ENCODE measurements at regions of chr4 and their contacts with region 1.

Region 1: GRCh38 chr4:152535903-152536544 is at the start of gene FBXW7:
- DNase-seq: peak; percentile 99
- H3K4me3 ChIP-seq: peak within 1 kb of the TSS; percentile 78 to 97 (median 85)
- H3K27ac ChIP-seq: peak within 1 kb of the TSS; percentile 88
- H3K4me1 ChIP-seq: peaks cover 16% of the 10 kb centered on the region
- H3K27me3 ChIP-seq: no peaks in the 10 kb centered on the region
- CTCF ChIP-seq: no peak
- total RNA-seq, gene FBXW7: 42.7 to 109 TPM

Region 2: DNA sequence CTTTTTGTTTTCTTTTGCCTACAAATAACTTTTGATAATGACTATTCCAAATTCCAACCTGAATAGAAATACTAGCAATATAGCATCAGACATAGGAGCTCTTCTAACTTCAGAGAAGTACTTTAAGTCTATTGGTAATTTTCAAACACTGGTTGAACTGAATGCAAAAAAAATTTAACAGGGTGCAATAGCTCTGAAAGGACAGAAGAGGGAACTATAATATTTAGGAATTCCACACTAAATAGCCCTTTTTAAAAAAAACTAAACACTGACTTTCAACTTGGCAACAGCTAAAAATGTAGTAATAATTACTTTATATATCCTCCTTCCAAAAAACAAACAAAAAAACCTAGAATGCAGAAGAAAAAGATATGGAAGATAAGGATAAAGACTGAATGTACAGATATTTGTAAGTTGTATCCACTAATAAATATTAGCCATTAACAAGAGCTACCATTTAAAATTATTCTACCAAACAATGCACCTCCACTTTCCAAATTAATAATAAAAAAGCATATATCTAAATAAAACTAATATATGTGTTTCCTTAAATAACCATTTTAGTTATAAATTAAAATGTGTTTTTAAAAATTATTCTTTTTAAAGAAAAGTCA is 81.5 kb before region 1 on chr4:
- CTCF ChIA-PET with region 1: interaction called, 3 read pairs
- dilution Hi-C with region 1: no loop called
- in situ Hi-C with region 1: no loop called
- intact Hi-C with region 1: loop called (anchors 1 kb)
- DNase-seq: peak; percentile 24
- H3K4me3 ChIP-seq: no peak overlapping the region
- H3K27ac ChIP-seq: no peak overlapping the region
- H3K4me1 ChIP-seq: no peaks in the 10 kb centered on the region
- H3K27me3 ChIP-seq: no peaks in the 10 kb centered on the region
- CTCF ChIP-seq: peak; percentile 61 to 78

Region 3: DNA sequence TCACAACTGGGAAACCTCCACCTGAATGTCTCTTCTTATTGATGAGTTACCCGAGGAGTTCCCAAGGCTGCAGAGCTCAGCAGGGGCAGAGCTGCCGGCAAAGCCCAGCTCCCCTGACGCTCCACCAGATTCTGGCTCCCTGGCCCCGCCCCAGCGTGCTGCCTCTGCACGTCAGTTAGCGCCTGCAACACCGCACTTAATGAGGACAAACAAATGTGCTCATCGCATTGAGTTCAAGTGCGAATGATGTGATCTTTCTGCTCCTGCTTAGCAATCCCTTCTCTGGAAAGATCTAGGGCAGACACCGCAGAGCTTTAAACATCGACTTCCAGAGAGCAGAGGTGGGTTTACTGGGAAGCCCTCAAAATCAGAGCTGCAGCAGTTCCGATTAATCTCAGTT is 55.4 kb after region 1 on chr4:
- CTCF ChIA-PET with region 1: interaction called, 5 read pairs
- dilution Hi-C with region 1: no loop called
- in situ Hi-C with region 1: no loop called
- intact Hi-C with region 1: loop called (anchors 2 kb)
- DNase-seq: peak; percentile 42
- H3K4me3 ChIP-seq: peak overlapping the region in 2 of 3 experiments; percentile 6 to 25
- H3K27ac ChIP-seq: peak overlapping the region; percentile 50
- H3K4me1 ChIP-seq: peaks cover 23% of the 10 kb centered on the region
- H3K27me3 ChIP-seq: no peaks in the 10 kb centered on the region
- CTCF ChIP-seq: no peak

Region 4: DNA sequence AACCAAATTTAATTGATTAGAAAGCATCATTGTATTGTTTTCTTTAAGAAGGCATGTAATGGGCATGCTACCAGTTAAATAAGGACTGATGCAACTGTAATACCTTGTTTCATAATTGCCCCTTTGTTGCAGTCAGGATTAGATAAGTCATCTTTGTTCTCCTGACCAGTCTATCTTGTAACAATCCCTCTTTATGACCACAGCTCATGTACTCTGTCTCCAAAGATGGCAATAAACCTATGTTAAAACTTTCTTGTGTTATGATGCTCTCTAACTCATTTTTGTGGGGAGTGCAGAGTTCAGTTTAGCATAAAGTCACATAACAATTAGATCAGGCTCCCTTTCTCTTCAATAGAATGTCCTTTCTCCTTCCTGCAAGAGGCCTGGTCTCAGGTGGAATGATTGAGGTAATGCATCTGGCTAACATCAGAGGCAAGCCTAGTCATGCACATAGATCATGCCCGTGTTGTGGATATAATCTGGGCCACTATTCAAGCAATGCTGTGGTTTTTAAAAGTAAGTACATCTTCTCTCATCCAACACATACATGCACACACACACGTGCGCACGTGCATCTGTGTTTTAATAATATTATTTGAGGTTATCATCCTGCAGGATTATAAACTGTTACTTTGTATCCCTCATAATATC is 98.2 kb after region 1 on chr4:
- CTCF ChIA-PET with region 1: no interaction called
- dilution Hi-C with region 1: no loop called
- in situ Hi-C with region 1: no loop called
- intact Hi-C with region 1: loop called (anchors 1 kb)
- DNase-seq: peak; percentile 90
- H3K4me3 ChIP-seq: no peak overlapping the region
- H3K27ac ChIP-seq: peak overlapping the region; percentile 92
- H3K4me1 ChIP-seq: peaks cover 28% of the 10 kb centered on the region
- H3K27me3 ChIP-seq: no peaks in the 10 kb centered on the region
- CTCF ChIP-seq: no peak

Region 5: DNA sequence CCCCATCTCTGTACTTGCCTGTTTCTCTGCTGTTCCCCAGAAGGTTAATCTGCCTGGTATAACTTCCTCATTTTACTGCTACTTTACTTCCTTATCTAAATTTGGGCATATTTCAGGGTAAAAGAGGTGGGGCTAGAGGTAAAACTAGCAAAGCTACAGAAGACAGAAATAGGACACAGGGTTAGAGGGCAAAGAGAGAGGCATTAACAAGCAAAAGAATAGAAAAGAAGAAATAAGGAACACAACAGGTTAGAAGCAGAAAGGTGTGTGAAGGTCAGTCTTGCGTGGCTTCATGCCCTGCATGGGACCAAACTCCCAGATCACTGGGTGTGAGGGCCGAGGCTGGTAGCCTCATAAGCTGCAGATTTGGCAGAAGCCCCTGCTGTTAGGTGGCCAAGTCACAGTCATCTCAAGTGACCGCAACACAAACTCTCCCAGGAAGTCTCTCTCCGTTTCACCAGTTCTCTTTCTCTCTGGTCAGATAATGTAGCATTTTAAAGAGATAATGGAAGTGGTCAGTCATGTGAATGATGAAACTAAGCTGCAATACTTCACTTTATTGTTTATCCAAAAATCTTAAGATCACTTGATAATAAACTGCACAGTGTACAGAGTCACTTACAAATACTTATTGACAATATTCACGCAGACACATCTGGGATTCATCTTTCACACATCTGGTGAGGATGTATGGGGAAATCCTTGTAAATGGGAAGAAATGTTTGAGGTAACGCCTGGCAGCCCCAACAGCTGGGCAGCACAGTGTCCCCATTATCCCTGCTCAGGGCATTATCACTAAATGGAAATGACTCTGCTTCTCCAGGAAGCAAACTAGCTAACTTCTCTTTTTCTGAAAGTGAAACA is 127.4 kb after region 1 on chr4:
- CTCF ChIA-PET with region 1: no interaction called
- dilution Hi-C with region 1: no loop called
- in situ Hi-C with region 1: no loop called
- intact Hi-C with region 1: no loop called
- DNase-seq: no peak
- H3K4me3 ChIP-seq: no peak overlapping the region
- H3K27ac ChIP-seq: no peak overlapping the region
- H3K4me1 ChIP-seq: no peaks in the 10 kb centered on the region
- H3K27me3 ChIP-seq: no peaks in the 10 kb centered on the region
- CTCF ChIP-seq: no peak

Region 6: DNA sequence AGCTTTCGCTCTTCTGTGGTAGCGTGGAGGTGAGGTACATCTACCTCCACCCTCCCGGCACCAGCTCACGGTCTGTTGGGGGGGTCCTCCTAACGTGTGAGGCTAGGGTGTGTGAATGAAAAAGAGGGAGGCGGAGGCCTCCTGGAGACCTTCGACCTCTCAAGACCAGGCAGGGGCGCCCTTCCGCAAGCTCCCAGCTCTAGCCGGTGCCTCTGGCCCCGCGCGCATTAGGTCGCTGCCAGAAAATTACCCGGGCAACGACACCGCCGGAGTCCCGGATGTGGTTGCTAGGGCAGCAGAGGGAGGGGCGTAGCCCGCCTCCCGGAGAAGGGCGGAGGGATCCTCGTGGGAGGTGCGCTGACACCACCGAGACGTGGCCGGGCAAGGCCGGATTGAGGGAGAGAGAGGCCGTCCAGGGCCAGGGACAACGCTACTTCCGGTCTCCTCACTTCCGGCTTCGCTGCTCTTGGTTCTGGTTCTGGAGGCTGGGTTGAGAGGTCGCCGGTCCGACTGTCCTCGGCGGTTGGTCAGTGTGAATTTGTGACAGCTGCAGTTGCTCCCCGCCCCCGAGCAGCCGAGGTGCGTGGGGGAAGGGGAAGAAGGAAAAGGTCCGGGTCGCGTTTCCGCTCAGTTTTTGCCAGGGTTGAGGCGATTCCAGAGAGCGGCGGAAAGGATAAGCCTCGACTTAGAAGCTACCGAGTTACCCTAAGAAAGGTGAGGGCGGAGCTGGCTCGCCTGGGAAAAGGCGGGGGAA is 243.7 kb after region 1 on chr4 and contains the starts of genes ARFIP1 and TIGD4:
- CTCF ChIA-PET with region 1: no interaction called
- dilution Hi-C with region 1: no loop called
- in situ Hi-C with region 1: no loop called
- intact Hi-C with region 1: loop called (anchors 1 kb)
- DNase-seq: peak; percentile 97
- H3K4me3 ChIP-seq: peak within 1 kb of the TSS; percentile 64 to 80 (median 66)
- H3K27ac ChIP-seq: peak within 1 kb of the TSS; percentile 86
- H3K4me1 ChIP-seq: peaks cover 22% of the 10 kb centered on the region
- H3K27me3 ChIP-seq: no peaks in the 10 kb centered on the region
- CTCF ChIP-seq: peak in 1 of 2 donors; percentile 23
- total RNA-seq, gene ARFIP1: 34.8 to 42.8 TPM
- total RNA-seq, gene TIGD4: 0.50 to 0.71 TPM

Region 7: GRCh38 chr4:152828122-152828521 is 292.1 kb after region 1 on chr4:
- CTCF ChIA-PET with region 1: no interaction called
- dilution Hi-C with region 1: no loop called
- in situ Hi-C with region 1: no loop called
- intact Hi-C with region 1: no loop called
- DNase-seq: no peak
- H3K4me3 ChIP-seq: no peak overlapping the region
- H3K27ac ChIP-seq: no peak overlapping the region
- H3K4me1 ChIP-seq: peaks cover 12% of the 10 kb centered on the region
- H3K27me3 ChIP-seq: no peaks in the 10 kb centered on the region
- CTCF ChIP-seq: no peak

Measured in mammary epithelial cell (primary cell).